HepG2 (cell line): ENCODE measurements at regions of chr6 and their contacts with region 1.

Region 1: DNA sequence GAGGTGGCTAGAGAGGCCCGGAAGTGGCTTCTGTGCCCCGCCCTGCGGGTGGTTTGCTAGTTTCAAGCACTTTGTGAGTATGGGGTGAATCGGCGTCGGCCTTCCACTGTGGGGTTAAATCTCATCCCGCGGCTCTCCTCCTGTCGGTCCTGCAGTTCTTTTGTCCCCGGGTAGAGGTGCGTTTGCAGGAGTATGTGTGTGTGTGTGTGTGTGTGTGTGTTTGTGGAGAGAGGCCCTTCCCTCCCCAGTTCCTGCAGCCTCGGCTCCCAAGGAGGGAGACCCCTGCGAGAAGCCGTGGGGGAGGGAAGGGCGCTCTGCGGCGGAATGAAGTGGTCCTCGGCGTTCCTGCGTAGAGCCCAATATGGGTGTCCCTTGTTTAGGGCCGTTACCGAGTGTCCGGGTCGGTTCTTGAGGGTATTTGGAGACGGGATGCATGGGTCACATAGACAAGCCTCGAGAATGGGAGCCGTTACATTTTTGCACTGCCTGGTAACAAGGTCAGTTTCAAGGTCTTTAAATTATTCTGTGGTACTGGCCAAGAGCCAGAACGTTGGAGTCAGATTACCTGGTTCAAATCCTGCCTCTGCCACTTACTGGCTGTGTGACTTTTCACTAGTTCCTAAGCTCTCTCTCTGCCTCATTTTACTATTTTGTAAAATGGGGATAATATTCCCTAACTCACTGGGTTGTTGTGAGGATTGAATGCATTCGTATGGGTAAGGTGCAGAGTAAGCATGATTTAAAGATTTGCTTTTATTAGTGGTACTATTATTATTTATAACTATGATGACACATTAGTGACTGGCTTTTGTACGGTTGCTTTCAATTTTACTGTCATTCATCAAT is at the start of gene ZKSCAN3:
- DNase-seq: peak; percentile 84
- ATAC-seq: peak; percentile 97
- H3K4me3 ChIP-seq: peak within 1 kb of the TSS; percentile 63 to 98 (median 85)
- H3K27ac ChIP-seq: peak within 1 kb of the TSS; percentile 77
- H3K4me1 ChIP-seq: peaks cover 32% of the 10 kb centered on the region
- H3K27me3 ChIP-seq: no peaks in the 10 kb centered on the region; a peak in 1 of 5 replicates
- CTCF ChIP-seq: 0 out of 2 replicates have a peak, but pooled peaks have one; percentile 19
- EP300 ChIP-seq: no peak
- POLR2A ChIP-seq: peak; percentile 81 to 88
- RAD21 ChIP-seq: peak; percentile 27; the same call in 1 of the 2 replicates
- total RNA-seq, gene ZKSCAN3: 7.4 and 8.1 TPM in 2 replicates

Region 2: GRCh38 chr6:28322661-28323060 is 27.5 kb before region 1 on chr6:
- CTCF ChIA-PET with region 1: no interaction called
- POLR2A ChIA-PET with region 1: interaction called, 10 read pairs
- in situ Hi-C with region 1: no loop called
- intact Hi-C with region 1: no loop called
- DNase-seq: peak; percentile 62
- ATAC-seq: peak; percentile 12; the same call in 1 of the 3 replicates
- H3K4me3 ChIP-seq: no peak overlapping the region
- H3K27ac ChIP-seq: no peak overlapping the region
- H3K4me1 ChIP-seq: peaks cover 36% of the 10 kb centered on the region
- H3K27me3 ChIP-seq: no peaks in the 10 kb centered on the region
- CTCF ChIP-seq: no peak
- EP300 ChIP-seq: peak in 1 of 2 experiments; percentile 59; a peak in 2 of 4 replicates
- POLR2A ChIP-seq: no peak
- RAD21 ChIP-seq: no peak

Region 3: GRCh38 chr6:28506807-28507475 is 156.8 kb after region 1 on chr6:
- CTCF ChIA-PET with region 1: no interaction called
- POLR2A ChIA-PET with region 1: no interaction called
- in situ Hi-C with region 1: no loop called
- intact Hi-C with region 1: no loop called
- DNase-seq: no peak
- ATAC-seq: no peak
- H3K4me3 ChIP-seq: no peak overlapping the region
- H3K27ac ChIP-seq: no peak overlapping the region
- H3K4me1 ChIP-seq: peaks cover 8% of the 10 kb centered on the region; the same call in 1 of the 2 replicates
- H3K27me3 ChIP-seq: peaks cover 3% of the 10 kb centered on the region in 2 experiments; a peak in 3 of 5 replicates
- CTCF ChIP-seq: no peak
- EP300 ChIP-seq: no peak
- POLR2A ChIP-seq: no peak
- RAD21 ChIP-seq: no peak